ENCODE measurements at regions of chr14 and their contacts with region 1.

Region 1: DNA sequence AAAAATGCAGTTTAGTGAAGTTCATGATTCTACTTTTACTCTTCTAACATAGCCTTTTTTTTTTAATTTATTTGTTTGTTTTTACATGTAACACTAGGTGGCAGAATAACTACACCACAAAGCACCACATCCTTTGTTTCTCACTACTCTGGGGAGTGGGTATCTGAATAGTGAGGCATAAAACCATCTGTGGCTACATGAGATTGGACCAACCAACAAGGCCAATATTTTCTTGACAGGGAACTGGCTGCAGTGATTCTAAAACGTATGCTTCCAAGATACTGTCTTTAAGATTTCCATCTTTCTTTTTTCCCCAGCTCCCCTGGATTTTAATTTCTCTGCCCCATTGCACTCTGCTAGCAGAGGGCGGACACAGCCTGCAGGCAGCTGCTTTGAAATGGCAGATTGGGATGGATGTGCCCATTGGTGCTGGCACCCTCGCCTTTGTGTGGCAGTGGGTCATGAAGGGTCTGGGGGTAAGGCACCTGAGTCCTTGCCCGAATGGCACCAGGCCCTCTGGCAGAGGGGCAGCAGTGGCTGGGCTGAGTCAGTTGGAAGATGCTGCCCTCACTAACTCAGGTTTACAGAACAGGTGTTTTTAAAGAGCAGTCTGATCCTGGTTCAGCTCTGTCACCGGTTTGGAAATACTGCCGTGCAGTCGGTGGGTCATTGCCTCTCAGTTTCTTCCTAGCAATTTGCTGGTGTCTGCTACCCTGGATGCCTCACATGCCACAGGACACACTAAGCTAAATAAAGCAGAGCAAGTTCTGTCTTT is 429.1 kb downstream of the RAD51B start:
- DNase-seq: peak; percentile 77
- H3K4me3 ChIP-seq: no peak overlapping the region
- H3K27ac ChIP-seq: peak overlapping the region; percentile 81 to 90 (median 88)
- H3K4me1 ChIP-seq: peaks cover 0 to 93% (median 82%) of the 10 kb centered on the region in 4 donors
- H3K27me3 ChIP-seq: no peaks in the 10 kb centered on the region
- CTCF ChIP-seq: peak in 3 of 4 experiments; percentile 50 to 75 (median 66)
- EP300 ChIP-seq: peak in 1 of 4 donors; percentile 14
- POLR2A ChIP-seq: no peak

Region 2: GRCh38 chr14:67943947-67944346 is 304.7 kb before region 1 on chr14:
- intact Hi-C with region 1: loop called (anchors 2 kb)
- DNase-seq: peak; percentile 94
- H3K4me3 ChIP-seq: no peak overlapping the region
- H3K27ac ChIP-seq: peak overlapping the region; percentile 29 to 86 (median 82)
- H3K4me1 ChIP-seq: peaks cover 0 to 57% (median 51%) of the 10 kb centered on the region in 4 donors
- H3K27me3 ChIP-seq: no peaks in the 10 kb centered on the region
- CTCF ChIP-seq: peak; percentile 61 to 95 (median 88)
- EP300 ChIP-seq: no peak
- POLR2A ChIP-seq: no peak

Region 3: DNA sequence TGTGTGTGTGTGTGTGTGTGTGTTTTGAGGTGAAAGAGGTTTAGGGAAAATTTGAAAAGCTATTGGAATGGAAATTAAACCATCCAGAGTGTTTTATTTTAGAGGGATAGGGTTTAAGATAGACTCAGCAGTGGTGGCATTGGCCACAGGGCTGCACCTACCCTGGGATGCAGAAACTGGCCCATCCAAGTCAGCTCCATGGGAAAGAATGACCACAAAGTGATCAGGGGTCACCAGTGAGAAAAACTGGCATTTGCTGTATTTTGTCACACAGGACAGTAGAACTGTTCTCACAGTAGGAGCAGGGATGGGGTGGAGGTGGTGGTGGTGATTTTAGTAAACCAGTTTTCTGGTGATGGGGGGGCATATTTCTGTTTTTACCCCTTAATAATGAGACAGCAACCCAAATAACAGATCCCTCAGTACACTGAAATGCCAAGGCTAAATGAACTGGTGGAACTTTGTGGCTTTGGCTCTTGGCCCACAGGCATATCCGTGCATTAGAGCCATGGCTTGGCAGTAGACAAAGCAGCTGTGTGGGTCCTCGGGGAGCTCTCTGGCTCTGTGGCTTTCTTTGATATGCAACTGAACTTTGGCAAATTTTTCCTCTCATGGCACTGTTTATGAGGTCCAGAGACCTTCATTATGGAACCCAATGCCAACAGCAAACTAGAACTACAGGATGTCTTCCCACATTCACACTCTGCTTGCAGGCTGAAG is 195.9 kb after region 1 on chr14:
- intact Hi-C with region 1: loop called (anchors 5 kb)
- DNase-seq: no peak
- H3K4me3 ChIP-seq: no peak overlapping the region
- H3K27ac ChIP-seq: peak overlapping the region in 2 of 4 donors; percentile 17 to 22
- H3K4me1 ChIP-seq: peaks cover 2 to 68% (median 43%) of the 10 kb centered on the region in 4 donors
- H3K27me3 ChIP-seq: no peaks in the 10 kb centered on the region
- CTCF ChIP-seq: no peak
- EP300 ChIP-seq: no peak
- POLR2A ChIP-seq: no peak

Region 4: DNA sequence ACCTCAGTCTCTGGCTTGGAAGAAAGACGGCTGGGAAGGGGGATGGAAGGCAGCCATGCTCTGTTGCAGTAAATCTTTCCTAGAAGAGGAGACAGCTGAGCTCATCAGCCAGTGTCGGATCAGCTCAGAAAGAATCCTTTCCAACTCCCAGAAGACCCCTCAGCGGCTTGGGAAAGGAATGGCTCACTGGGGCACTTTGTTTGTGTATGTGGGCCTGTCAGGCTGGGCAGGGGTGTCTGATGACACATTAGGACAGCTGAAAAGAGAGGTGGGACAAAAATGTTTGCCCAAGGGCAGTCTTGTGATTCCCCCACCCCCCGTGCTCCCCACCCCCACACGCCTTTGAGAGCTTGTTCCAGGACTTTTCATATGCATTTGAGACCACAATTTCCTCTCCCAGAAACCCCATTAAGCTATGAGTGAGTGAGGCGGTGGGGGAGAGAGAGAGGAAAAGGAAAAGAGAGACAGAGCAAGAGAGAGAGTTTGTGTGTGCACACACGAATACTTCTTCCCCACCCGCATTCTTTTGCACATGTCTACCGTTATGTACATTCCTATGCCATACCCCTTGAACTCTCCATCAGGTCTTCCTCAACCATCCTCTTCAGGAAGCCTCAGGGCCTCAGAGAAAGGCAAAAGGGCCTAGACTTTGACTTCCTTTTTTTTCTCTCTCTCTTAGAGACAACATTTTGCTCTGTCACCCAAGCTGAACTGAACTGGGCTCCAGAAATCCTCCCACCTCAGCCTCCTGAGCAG is 345.3 kb after region 1 on chr14:
- intact Hi-C with region 1: loop called (anchors 5 kb)
- DNase-seq: no peak
- H3K4me3 ChIP-seq: no peak overlapping the region
- H3K27ac ChIP-seq: peak overlapping the region in 2 of 4 donors; percentile 16 to 92
- H3K4me1 ChIP-seq: peaks cover 0 to 61% (median 43%) of the 10 kb centered on the region in 4 donors
- H3K27me3 ChIP-seq: no peaks in the 10 kb centered on the region
- CTCF ChIP-seq: no peak
- EP300 ChIP-seq: no peak
- POLR2A ChIP-seq: no peak

Region 5: GRCh38 chr14:68788996-68789820 is 540.5 kb after region 1 on chr14:
- intact Hi-C with region 1: loop called (anchors 2 kb)
- DNase-seq: peak; percentile 95
- H3K4me3 ChIP-seq: peak overlapping the region; percentile 76 to 88 (median 80)
- H3K27ac ChIP-seq: peak overlapping the region; percentile 98 to 100 (median 99)
- H3K4me1 ChIP-seq: peaks cover 0 to 28% (median 24%) of the 10 kb centered on the region in 4 donors
- H3K27me3 ChIP-seq: no peaks in the 10 kb centered on the region
- CTCF ChIP-seq: peak in 3 of 4 experiments; percentile 50 to 67 (median 56)
- EP300 ChIP-seq: peak in 1 of 4 donors; percentile 3
- POLR2A ChIP-seq: no peak